Caco-2 (cell line): ENCODE measurements at regions of chr11 and their contacts with region 1.

Region 1: DNA sequence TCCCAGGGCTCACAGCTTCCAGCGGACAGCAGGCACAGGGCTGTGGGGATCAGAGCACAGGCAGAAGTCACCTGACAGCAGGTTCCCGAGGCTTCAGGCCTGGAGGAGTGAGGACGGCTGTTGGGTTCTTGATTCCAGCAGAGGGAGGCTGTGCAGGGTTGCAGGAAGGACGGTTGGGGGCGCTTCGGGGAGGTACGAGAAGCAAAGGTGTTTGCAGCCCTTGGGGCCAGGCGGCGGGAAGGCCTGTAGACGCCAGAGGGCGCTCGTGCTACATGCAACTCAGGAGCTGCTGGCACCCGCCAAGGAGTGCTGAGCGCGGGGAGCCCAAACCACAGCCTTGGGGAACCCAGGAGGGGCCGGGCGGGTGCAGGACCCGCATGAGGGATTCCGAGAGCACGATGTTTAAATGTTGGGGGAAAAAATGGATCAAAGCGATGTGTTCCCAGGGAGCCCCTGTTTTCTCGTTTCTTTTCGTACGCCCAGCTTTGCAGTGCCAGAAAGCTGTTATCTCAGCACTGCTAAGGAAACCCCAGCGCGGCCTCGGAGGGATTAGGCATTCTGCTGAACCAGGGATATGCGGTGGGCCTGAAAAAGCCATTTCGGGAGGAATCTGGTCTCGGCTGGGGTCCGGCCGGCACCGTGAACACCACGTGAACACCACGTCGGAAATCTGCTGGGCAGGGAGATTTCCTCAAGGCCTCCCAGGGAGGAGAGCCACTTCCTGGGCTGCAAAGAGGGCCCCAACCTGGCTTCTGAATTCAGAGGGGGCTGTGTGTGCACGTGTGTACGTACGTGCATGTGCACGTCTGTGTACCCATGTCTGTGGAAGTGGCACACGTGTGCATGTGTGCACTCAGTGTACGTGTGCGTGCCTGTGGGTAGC is 88.1 kb downstream of the KCNQ1 start:
- DNase-seq: peak; percentile 92 to 95
- H3K4me3 ChIP-seq: no peak overlapping the region
- H3K4me3 Mint-ChIP-seq: no peak overlapping the region
- H3K27ac Mint-ChIP-seq: peak overlapping the region; percentile 37
- H3K4me1 ChIP-seq: peaks cover 21% of the 10 kb centered on the region
- H3K4me1 Mint-ChIP-seq: no peaks in the 10 kb centered on the region
- H3K27me3 ChIP-seq: no peaks in the 10 kb centered on the region
- H3K27me3 Mint-ChIP-seq: no peaks in the 10 kb centered on the region
- CTCF ChIP-seq: peak; percentile 98 to 99

Region 2: DNA sequence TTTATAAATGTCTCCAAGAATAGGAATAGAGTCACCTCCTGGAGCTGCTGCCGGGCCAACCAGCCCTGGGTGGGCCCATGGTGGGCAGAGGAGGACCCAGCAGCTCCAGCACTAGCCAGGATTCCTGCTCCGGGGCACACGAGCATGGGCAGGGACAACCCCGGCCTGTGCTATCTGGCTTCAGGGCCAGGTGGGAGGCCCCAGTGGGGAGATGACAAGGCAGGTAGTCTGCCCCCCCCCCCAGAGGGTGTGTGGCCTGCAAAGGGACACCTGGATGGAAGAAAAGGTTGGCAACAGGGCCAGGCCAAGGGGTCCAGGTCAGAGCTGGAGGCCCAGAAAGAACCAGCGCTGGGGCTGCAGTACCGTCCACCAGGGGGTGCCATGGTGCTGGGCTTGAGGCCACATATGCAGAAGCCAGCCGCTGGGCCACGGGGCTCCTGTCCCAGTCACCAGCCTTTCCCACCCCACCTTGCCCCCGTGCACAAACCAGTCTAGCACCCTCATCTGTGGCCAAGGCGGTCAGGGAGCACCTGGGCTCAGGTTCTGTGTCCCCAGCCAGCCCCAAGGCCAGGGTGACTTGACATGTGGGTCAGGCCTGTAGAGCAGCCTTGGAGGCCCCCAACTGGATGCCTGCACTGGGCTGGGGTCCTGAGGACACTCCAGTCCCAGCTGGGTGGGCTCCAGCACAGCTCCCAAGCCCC is 227.7 kb before region 1 on chr11:
- CTCF ChIA-PET with region 1: interaction called, 9 read pairs
- POLR2A ChIA-PET with region 1: no interaction called
- intact Hi-C with region 1: loop called (anchors 5 kb)
- DNase-seq: peak; percentile 84 to 89
- H3K4me3 ChIP-seq: no peak overlapping the region
- H3K4me3 Mint-ChIP-seq: no peak overlapping the region
- H3K27ac Mint-ChIP-seq: no peak overlapping the region
- H3K4me1 ChIP-seq: peaks cover 44% of the 10 kb centered on the region
- H3K4me1 Mint-ChIP-seq: no peaks in the 10 kb centered on the region
- H3K27me3 ChIP-seq: no peaks in the 10 kb centered on the region
- H3K27me3 Mint-ChIP-seq: no peaks in the 10 kb centered on the region
- CTCF ChIP-seq: peak; percentile 89 to 95

Region 3: DNA sequence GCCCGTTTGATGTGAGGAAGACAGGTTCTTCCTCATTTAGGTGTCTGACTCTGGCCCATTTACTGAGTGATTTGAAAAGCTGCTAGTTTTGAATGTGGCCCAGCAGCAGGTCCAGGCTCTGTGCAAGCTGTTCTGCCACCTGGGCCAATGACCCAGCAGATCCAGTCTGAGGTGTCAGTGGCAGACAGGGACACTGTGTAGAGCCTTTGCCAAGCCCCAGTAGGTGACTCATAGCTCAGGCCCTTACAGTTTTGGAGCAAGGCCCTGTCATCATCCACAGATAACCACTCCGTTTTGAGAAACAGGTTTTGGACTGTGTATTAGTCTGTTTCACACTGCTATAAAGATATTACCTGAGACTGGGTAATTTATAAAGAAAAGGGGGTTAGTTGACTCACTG is 207.2 kb before region 1 on chr11:
- CTCF ChIA-PET with region 1: no interaction called
- POLR2A ChIA-PET with region 1: no interaction called
- intact Hi-C with region 1: no loop called
- DNase-seq: no peak
- H3K4me3 ChIP-seq: no peak overlapping the region
- H3K4me3 Mint-ChIP-seq: no peak overlapping the region
- H3K27ac Mint-ChIP-seq: no peak overlapping the region
- H3K4me1 ChIP-seq: no peaks in the 10 kb centered on the region
- H3K4me1 Mint-ChIP-seq: no peaks in the 10 kb centered on the region
- H3K27me3 ChIP-seq: no peaks in the 10 kb centered on the region
- H3K27me3 Mint-ChIP-seq: no peaks in the 10 kb centered on the region
- CTCF ChIP-seq: no peak

Region 4: GRCh38 chr11:2409611-2410468 is 123.1 kb before region 1 on chr11:
- CTCF ChIA-PET with region 1: no interaction called
- POLR2A ChIA-PET with region 1: no interaction called
- intact Hi-C with region 1: no loop called
- DNase-seq: no peak
- H3K4me3 ChIP-seq: no peak overlapping the region
- H3K4me3 Mint-ChIP-seq: no peak overlapping the region
- H3K27ac Mint-ChIP-seq: no peak overlapping the region
- H3K4me1 ChIP-seq: no peaks in the 10 kb centered on the region
- H3K4me1 Mint-ChIP-seq: no peaks in the 10 kb centered on the region
- H3K27me3 ChIP-seq: no peaks in the 10 kb centered on the region
- H3K27me3 Mint-ChIP-seq: no peaks in the 10 kb centered on the region
- CTCF ChIP-seq: no peak

Region 5: DNA sequence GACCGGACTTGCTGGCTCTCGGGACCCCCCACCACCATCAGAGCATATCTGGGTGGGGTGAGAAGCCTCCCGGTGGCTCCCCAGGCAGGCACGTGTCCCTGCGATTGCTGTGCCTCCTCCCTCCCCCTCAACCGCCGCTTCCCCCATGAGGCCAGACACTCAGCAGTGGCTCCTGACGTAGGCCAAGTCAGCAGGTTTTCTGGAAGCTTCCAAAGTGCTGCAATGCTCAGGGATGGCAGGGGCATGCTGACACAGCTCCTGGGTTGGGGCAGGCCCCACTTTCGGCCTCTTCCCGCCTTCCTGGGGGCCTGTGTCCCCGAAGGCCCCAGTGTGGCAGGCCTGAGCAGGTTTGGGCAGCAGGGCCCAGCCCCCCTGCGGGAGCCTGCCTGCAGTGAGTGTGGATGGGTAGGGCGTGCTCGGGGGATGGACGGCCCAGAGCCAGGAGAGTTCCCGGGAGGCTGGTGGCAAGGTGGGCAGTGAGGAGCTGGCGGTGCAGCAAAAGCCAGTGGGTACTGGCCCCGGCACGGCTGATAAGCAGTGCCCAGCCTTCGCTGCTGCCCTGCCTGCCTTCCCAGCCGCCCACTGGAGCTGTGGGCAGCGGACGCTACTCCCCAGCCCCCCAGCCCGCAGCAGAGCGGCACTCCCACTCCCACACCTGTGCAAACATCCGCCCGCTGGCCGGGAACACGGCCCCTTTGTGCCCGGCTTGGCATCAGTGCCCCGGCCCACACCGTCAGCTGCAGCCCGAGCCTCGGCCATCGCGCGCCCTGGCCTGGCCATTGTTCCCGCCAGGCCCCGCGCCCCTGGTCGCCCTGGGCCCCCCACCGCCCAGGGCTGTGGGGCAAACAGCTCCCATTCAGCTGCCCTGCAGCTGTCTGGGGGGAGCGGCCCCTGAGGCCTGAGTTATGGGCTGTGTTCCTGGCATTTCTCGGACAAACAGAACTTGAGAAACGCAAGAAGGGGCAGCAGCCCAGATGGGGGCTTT is 41.9 kb after region 1 on chr11:
- CTCF ChIA-PET with region 1: no interaction called
- POLR2A ChIA-PET with region 1: no interaction called
- intact Hi-C with region 1: no loop called
- DNase-seq: peak in 1 of 2 experiments; percentile 32
- H3K4me3 ChIP-seq: no peak overlapping the region
- H3K4me3 Mint-ChIP-seq: no peak overlapping the region
- H3K27ac Mint-ChIP-seq: no peak overlapping the region
- H3K4me1 ChIP-seq: peaks cover 10% of the 10 kb centered on the region; the same call in 1 of the 2 replicates
- H3K4me1 Mint-ChIP-seq: peaks cover 6% of the 10 kb centered on the region
- H3K27me3 ChIP-seq: no peaks in the 10 kb centered on the region
- H3K27me3 Mint-ChIP-seq: no peaks in the 10 kb centered on the region
- CTCF ChIP-seq: no peak

Region 6: DNA sequence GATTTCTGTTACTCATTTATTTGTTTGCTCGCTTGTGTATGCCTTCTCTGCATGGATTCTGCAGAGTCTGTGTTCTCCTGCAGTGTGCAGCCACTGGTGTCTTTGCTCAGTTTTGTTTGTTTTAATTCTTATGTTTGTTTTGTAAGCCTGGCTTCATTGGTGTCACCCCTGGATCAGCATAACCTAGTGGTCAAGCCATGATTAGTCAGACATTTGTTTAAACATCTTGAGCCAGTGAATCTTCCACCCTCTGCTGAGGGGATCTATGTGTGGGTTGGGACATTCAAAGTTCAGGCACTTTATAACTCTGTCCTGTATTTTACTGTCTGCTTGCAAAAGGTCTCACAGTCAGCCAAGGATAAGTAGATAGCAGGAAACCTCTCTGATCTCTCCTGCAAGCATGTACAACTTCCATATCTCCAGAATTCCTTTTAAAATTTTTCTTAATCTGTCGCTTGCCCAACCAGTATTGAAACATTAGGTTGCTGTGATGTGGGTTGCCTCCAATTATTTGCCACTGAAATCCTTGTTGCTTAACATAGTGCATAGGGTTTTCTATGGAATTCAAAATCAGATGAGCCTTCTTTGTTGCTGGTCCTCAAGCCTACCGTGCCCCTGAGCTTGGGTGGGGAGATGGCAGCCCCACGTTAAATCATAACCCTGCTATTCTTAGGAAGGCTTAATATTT is 80.1 kb after region 1 on chr11:
- CTCF ChIA-PET with region 1: no interaction called
- POLR2A ChIA-PET with region 1: no interaction called
- intact Hi-C with region 1: loop called (anchors 2 kb)
- DNase-seq: peak; percentile 32 to 35
- H3K4me3 ChIP-seq: no peak overlapping the region
- H3K4me3 Mint-ChIP-seq: no peak overlapping the region
- H3K27ac Mint-ChIP-seq: no peak overlapping the region
- H3K4me1 ChIP-seq: no peaks in the 10 kb centered on the region
- H3K4me1 Mint-ChIP-seq: no peaks in the 10 kb centered on the region
- H3K27me3 ChIP-seq: no peaks in the 10 kb centered on the region; the same call in 1 of the 2 replicates
- H3K27me3 Mint-ChIP-seq: peaks cover 18% of the 10 kb centered on the region
- CTCF ChIP-seq: no peak

Region 7: GRCh38 chr11:2885676-2886081 is 352.7 kb after region 1 on chr11 and contains the start of gene CDKN1C:
- CTCF ChIA-PET with region 1: interaction called, 131 read pairs
- POLR2A ChIA-PET with region 1: interaction called, 5 read pairs
- intact Hi-C with region 1: loop called (anchors 1 kb)
- DNase-seq: peak; percentile 83 to 87
- H3K4me3 ChIP-seq: peak within 1 kb of the TSS; percentile 59
- H3K4me3 Mint-ChIP-seq: peak within 1 kb of the TSS; percentile 91
- H3K27ac Mint-ChIP-seq: no peak within 1 kb of the TSS
- H3K4me1 ChIP-seq: peaks cover 39% of the 10 kb centered on the region
- H3K4me1 Mint-ChIP-seq: peaks cover 12% of the 10 kb centered on the region
- H3K27me3 ChIP-seq: no peaks in the 10 kb centered on the region
- H3K27me3 Mint-ChIP-seq: peaks cover 8% of the 10 kb centered on the region
- CTCF ChIP-seq: no peak
- total RNA-seq, gene CDKN1C: 15.0 and 25.5 TPM in 2 replicates

Region 8: DNA sequence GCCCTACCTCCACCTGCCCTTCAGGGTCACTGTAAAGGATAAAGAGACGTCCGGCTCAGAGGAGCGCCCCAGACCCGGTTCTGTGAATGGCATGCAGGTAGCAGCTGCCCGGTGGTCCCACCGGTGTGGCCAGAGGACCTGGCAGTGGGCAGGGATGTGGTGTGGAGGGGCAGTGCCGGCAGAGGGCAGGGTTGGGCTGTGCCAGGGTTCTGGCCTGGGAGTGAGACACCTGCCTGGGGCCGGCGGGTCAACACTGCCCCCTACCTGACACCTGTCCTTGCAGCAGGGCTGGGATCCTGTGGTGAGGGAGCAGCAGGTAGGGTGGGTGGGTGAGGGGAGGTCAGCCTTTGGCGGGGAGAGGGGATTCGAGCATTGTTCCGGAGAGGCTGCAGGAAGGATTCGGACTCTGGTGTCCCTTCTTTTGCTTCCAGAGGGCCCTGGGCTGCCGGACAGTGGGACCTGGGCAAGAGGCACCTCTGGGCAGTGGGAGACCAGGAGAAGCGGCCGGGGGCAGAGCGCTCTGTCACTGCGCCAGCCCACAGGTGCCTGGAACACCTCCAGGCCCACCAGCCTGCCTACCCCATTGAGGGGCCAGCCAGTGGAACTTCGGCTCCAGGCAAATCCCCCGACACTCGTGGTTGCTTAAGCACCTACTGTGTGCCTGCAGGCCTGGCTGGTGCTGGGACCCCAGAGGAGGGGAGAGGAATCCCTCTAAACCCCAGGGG is 397.9 kb after region 1 on chr11:
- CTCF ChIA-PET with region 1: interaction called, 7 read pairs
- POLR2A ChIA-PET with region 1: no interaction called
- intact Hi-C with region 1: loop called (anchors 1 kb)
- DNase-seq: peak; percentile 92 to 95
- H3K4me3 ChIP-seq: peak overlapping the region; percentile 91
- H3K4me3 Mint-ChIP-seq: peak overlapping the region; percentile 73
- H3K27ac Mint-ChIP-seq: peak overlapping the region; percentile 79
- H3K4me1 ChIP-seq: peaks cover 19% of the 10 kb centered on the region
- H3K4me1 Mint-ChIP-seq: no peaks in the 10 kb centered on the region
- H3K27me3 ChIP-seq: 0 out of 2 replicates have a peak, but pooled peaks cover 2% of the 10 kb centered on the region
- H3K27me3 Mint-ChIP-seq: no peaks in the 10 kb centered on the region
- CTCF ChIP-seq: peak; percentile 80 to 95